Left colon (tissue), 2 donors: ENCODE measurements at regions of chr12 and their contacts with region 1.

Region 1: GRCh38 chr12:100827901-100828520 is 33.4 kb downstream of the ANO4 start:
- DNase-seq: no peak
- ATAC-seq: peak; percentile 52

Region 2: DNA sequence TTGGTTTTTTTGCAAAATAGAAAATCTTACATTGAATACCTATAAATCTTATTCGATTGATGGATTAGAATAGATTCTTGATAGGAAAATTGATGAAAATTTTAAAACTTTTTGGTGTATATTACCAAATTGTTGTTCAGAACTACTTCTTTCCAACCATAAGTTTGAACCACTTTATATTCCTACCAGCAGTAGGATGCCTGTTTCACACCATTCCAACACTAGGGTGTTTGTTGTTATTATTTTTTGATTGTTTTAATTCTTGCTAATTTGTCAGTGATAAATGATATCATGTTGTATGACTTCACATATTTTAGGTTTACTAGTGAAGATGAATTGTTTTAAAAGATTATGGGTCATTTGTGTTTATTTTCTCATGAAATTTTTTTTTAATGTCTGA is 495.2 kb after region 1 on chr12:
- intact Hi-C with region 1: loop called in 1 of 2 experiments (anchors 5 kb)
- DNase-seq: no peak
- ATAC-seq: no peak

Region 3: DNA sequence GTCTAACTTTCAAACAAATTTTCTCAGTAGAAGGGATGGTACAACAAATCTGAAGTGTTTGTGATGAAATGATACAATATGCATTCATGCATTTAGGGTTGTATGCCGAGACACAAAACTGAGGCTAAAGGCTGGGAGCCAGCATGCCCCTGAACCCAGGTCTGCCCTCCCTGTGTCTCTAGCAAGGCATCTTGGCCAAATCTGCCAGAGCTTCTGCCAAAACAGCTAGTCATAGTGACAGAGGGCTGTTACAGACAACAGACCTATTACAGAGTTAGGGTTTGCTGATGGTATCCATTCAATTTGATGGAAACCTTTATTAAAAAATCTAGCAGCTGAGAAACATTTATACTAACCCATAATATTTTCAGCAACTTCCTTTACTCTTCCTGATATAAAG is 858.2 kb after region 1 on chr12:
- intact Hi-C with region 1: no loop called
- DNase-seq: no peak
- ATAC-seq: no peak